ENCODE measurements at regions of chr2 and their contacts with region 1.

Region 1: DNA sequence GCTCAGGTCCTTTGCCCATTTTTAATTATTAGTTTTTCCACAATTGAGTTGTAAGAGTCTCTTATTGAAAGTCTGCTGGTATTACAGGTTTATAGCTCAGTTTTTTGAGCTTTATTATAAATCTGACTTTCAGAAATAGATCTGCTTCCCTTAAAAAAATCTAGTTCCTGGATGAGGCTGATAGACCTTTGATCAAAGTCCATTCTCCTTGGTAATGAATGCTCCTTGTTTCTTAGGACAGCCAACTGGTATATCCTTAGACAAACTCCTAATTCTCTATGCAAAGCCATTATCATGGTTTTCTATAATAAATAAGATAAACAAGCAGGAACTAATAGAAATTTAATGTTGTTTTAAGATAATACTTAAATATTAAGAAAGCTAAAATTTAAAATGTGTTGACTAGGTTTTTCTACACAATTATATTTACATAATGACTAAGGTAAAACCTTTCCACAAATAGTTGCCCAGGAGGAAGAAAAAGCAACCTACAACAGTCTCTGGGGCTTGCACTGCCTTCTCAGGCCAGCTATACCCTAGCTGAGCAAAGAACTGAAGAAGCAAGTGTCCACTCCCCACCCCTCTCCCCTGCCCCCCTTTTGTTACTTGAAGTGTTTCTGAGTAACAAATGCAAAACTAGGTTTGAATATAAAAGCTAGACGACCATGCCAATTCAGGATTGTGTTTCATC is 16.9 kb downstream of the NT5DC4 start:
- DNase-seq: no peak
- ATAC-seq: no peak
- H3K4me3 ChIP-seq: peak overlapping the region in 1 of 2 experiments; percentile 5; a peak in 1 of 4 replicates
- H3K27ac ChIP-seq: no peak overlapping the region
- H3K4me1 ChIP-seq: peaks cover 15 to 23% of the 10 kb centered on the region in 2 experiments
- H3K27me3 ChIP-seq: no peaks in the 10 kb centered on the region
- CTCF ChIP-seq: no peak
- POLR2A ChIP-seq: no peak
- RAD21 ChIP-seq: no peak

Region 2: GRCh38 chr2:112749755-112750559 is 12.3 kb after region 1 on chr2:
- CTCF ChIA-PET with region 1: interaction called, 15 read pairs
- POLR2A ChIA-PET with region 1: no interaction called
- RAD21 ChIA-PET with region 1: no interaction called
- intact Hi-C with region 1: no loop called
- DNase-seq: no peak
- ATAC-seq: peak; percentile 94
- H3K4me3 ChIP-seq: no peak overlapping the region
- H3K27ac ChIP-seq: no peak overlapping the region
- H3K4me1 ChIP-seq: no peaks in the 10 kb centered on the region
- H3K27me3 ChIP-seq: no peaks in the 10 kb centered on the region
- CTCF ChIP-seq: peak; percentile 83 to 96 (median 92)
- POLR2A ChIP-seq: no peak
- RAD21 ChIP-seq: peak; percentile 81

Region 3: DNA sequence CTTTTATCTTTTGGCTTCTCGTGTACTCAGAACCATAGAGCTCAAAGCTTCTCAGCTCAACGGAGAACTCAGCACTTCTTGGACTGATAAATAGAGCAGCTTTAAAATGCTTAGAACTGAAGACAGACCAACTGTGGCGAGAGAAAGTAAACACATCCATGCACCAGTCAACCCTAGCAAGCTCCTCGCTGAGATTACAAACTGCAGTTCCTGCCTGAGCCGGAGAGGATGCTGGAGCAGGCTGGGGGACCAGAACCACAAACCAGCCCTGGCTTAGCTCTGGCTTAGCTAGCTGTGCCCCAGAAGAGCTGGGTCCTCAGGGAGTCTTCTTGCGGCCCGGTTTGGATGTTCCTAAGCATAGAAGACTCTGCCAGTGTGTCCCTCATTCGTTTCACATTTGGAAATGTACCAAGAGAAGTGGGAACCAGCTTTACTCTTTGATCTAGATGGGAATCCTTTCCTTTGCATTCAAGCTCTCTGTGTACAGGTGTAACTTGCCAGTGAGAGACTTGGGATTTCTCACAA is 535.4 kb after region 1 on chr2:
- CTCF ChIA-PET with region 1: no interaction called
- POLR2A ChIA-PET with region 1: no interaction called
- RAD21 ChIA-PET with region 1: no interaction called
- intact Hi-C with region 1: no loop called
- DNase-seq: no peak
- ATAC-seq: no peak
- H3K4me3 ChIP-seq: no peak overlapping the region
- H3K27ac ChIP-seq: no peak overlapping the region
- H3K4me1 ChIP-seq: no peaks in the 10 kb centered on the region
- H3K27me3 ChIP-seq: no peaks in the 10 kb centered on the region
- CTCF ChIP-seq: no peak
- POLR2A ChIP-seq: no peak
- RAD21 ChIP-seq: no peak